ENCODE measurements at regions of chr14 and their contacts with region 1.

Region 1: GRCh38 chr14:41597647-41598046 is 9.0 kb upstream of the LRFN5 start:
- DNase-seq: no peak
- H3K4me3 ChIP-seq: no peak overlapping the region
- H3K27ac ChIP-seq: no peak overlapping the region
- H3K4me1 ChIP-seq: no peaks in the 10 kb centered on the region
- H3K27me3 ChIP-seq: no peaks in the 10 kb centered on the region
- CTCF ChIP-seq: no peak

Region 2: GRCh38 chr14:40417777-40418401 is 1179.8 kb before region 1 on chr14:
- CTCF ChIA-PET with region 1: no interaction called
- POLR2A ChIA-PET with region 1: no interaction called
- intact Hi-C with region 1: loop called (anchors 5 kb)
- DNase-seq: peak in 1 of 2 experiments; percentile 32
- H3K4me3 ChIP-seq: no peak overlapping the region
- H3K27ac ChIP-seq: no peak overlapping the region
- H3K4me1 ChIP-seq: no peaks in the 10 kb centered on the region
- H3K27me3 ChIP-seq: no peaks in the 10 kb centered on the region
- CTCF ChIP-seq: peak; percentile 64

Region 3: DNA sequence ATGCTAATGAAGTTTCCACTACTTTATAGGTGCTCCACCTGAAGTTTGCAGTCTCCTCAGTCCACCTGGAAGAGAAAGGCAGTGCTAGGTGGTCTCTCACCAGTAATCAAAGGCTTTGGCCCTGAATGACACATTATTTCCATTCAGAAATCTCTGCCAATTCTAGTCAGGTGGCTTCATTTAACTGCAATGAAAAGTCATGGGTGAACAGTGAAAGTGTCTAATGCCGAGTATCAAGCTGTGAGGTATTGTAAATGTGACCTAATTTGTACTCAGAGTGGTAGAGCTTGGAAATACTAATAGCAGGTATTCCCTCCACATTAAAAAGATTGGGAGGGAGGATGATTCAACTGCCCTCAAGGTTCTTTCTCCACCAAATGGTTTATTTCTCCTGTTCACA is 211.8 kb before region 1 on chr14:
- CTCF ChIA-PET with region 1: interaction called, 12 read pairs
- POLR2A ChIA-PET with region 1: no interaction called
- intact Hi-C with region 1: no loop called
- DNase-seq: no peak
- H3K4me3 ChIP-seq: no peak overlapping the region
- H3K27ac ChIP-seq: no peak overlapping the region
- H3K4me1 ChIP-seq: no peaks in the 10 kb centered on the region
- H3K27me3 ChIP-seq: no peaks in the 10 kb centered on the region
- CTCF ChIP-seq: no peak

Region 4: DNA sequence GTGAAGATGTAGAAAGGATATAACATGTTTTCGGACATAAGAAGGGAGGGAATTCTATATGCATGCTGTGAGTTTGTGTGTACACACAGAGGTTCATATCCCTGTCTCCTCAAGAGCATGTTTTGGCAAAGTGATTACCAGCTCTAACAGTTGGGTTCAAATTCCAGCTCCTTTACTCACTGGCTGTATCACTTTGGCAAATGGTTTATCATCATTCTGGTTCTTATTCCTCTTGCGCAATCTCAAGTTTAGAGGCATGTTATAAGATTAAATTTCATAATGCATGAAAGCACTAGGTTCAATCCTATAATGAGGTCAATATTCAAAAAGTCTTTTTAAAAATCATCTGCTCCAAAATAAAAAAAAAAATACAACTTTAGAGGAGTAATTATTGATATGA is 98.7 kb before region 1 on chr14:
- CTCF ChIA-PET with region 1: no interaction called
- POLR2A ChIA-PET with region 1: no interaction called
- intact Hi-C with region 1: no loop called
- DNase-seq: no peak
- H3K4me3 ChIP-seq: no peak overlapping the region
- H3K27ac ChIP-seq: no peak overlapping the region
- H3K4me1 ChIP-seq: no peaks in the 10 kb centered on the region
- H3K27me3 ChIP-seq: no peaks in the 10 kb centered on the region
- CTCF ChIP-seq: no peak

Measured in PC-9 (cell line).